Activated T-helper 2 cell treated with anti-CD3 and anti-CD28 coated beads, Interferon-gamma antibody, Interleukin-2, Interleukin-4, amounts not matched to agents 10 μg/mL and 5 μg/mL and 100 μg/mL, durations not matched to agents 14 hours and 24 hours and 36 hours (primary cell): ENCODE measurements at regions of chr4 and their contacts with region 1.

Region 1: GRCh38 chr4:55948726-55949474 is at the start of gene CEP135:
- DNase-seq: peak; percentile 91
- H3K4me3 Mint-ChIP-seq: peak within 1 kb of the TSS; percentile 83
- H3K27ac Mint-ChIP-seq: peak within 1 kb of the TSS; percentile 93
- H3K4me1 Mint-ChIP-seq: peaks cover 30% of the 10 kb centered on the region
- H3K27me3 Mint-ChIP-seq: no peaks in the 10 kb centered on the region
- total RNA-seq, gene CEP135: 13.3 and 15.7 TPM in 2 replicates

Region 2: GRCh38 chr4:55345980-55346850 is 602.7 kb before region 1 on chr4 and contains the start of gene SRD5A3:
- intact Hi-C with region 1: loop called (anchors 10 kb)
- DNase-seq: peak; percentile 72
- H3K4me3 Mint-ChIP-seq: peak within 1 kb of the TSS; percentile 90
- H3K27ac Mint-ChIP-seq: peak within 1 kb of the TSS; percentile 95
- H3K4me1 Mint-ChIP-seq: peaks cover 29% of the 10 kb centered on the region
- H3K27me3 Mint-ChIP-seq: no peaks in the 10 kb centered on the region
- total RNA-seq, gene SRD5A3: 32.4 and 33.5 TPM in 2 replicates

Region 3: DNA sequence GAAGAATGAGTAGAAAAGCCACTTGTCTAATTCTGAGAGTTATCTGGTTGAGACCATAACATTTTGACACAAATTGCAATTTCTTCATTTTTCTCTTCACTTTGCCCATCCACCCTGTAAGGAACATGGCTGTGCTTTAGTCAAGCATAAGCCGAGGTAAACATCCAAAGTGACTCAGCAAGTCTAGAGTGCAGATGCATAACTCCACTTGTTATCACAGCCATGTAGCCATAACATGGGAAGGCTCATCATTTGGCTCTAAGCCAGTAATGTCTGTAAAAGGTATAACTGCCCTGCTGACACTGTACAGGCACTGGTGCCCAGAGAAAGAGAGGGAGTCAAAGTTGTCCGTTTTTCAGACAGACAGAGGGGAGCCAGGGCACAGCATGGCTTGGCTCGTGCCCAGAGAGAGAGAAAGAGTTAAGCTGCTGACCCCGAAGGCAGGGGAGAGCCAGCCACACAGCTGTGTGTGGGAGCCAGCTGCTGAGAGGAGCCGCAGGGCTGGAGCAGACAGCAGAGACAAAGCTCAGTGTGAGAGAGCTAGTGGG is 206.2 kb before region 1 on chr4:
- intact Hi-C with region 1: no loop called
- DNase-seq: no peak
- H3K4me3 Mint-ChIP-seq: no peak overlapping the region
- H3K27ac Mint-ChIP-seq: no peak overlapping the region
- H3K4me1 Mint-ChIP-seq: no peaks in the 10 kb centered on the region
- H3K27me3 Mint-ChIP-seq: peaks cover 15% of the 10 kb centered on the region

Region 4: DNA sequence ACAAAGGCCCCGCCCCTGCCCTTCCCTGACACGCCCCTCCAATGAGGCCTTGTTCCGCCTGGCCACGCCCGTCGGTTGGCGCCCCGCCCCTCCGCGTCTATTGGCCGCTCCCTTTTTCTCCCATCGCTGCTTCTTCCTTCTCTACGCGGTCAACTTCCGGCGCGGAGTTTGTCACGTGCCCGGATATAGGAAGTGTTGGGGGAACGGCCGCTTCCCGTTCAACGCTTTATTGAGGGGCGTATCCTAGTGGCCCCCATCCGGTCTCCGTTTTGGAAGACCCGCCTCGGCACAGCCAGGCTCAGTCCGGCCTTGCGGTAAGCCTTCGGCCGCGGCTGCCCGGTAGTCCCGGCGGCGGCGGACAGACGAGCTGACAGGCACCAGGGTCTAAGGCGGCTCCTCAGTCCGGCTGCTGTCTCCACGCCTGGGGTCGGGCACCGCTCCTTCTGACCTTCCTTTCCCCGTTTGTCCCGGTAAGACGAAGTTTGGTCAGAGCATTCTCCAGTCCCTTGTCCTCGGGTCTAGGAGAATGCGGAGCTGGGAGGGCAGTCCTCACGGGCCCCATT is 95.3 kb before region 1 on chr4 and contains the start of gene EXOC1:
- intact Hi-C with region 1: loop called (anchors 2 kb)
- DNase-seq: peak; percentile 94
- H3K4me3 Mint-ChIP-seq: peak within 1 kb of the TSS; percentile 18
- H3K27ac Mint-ChIP-seq: peak within 1 kb of the TSS; percentile 89
- H3K4me1 Mint-ChIP-seq: peaks cover 20% of the 10 kb centered on the region
- H3K27me3 Mint-ChIP-seq: no peaks in the 10 kb centered on the region
- total RNA-seq, gene EXOC1: 20.4 and 22.2 TPM in 2 replicates

Region 5: DNA sequence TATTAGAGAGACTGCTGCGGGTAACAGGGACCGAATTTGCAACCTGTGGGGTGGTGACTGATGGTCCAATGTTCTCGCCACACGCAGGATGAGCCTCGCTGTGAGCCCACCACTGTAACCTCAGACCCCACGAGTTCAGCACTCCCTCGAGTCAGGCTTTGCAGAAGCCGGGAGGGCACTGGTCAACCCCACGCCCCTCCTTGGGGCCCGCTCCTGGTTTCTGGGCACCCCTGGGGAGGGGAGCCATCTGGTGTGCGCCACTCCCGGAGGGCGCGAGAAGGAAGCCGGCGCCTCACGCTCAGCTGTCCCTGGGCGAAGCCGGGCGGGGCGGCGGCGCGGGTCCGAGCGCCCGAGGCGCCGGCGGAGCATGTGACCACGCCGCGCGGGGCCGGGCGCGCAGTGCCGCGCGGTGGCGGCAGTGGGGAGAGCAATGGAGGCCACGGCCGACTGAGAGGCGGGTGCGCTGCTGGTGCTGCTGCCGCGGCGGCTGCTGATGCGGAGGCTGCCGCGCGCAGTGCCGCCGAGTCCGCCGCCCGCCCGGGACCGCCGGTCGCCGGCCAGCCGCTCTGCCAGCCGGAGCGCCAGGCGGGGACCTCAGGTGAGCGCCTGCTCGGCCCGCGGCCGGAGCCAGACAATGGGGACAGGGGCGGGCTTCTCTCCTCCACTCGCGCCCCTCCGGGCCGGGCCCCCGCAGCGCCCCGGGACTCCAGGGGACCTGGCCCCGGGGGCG is 100.0 kb after region 1 on chr4:
- intact Hi-C with region 1: loop called (anchors 1 kb)
- DNase-seq: peak; percentile 51
- H3K4me3 Mint-ChIP-seq: peak overlapping the region; percentile 68
- H3K27ac Mint-ChIP-seq: no peak overlapping the region
- H3K4me1 Mint-ChIP-seq: peaks cover 8% of the 10 kb centered on the region
- H3K27me3 Mint-ChIP-seq: peaks cover 59% of the 10 kb centered on the region

Region 6: GRCh38 chr4:56387023-56388001 is 438.4 kb after region 1 on chr4 and contains the start of gene AASDH:
- intact Hi-C with region 1: loop called (anchors 1 kb)
- DNase-seq: peak; percentile 91
- H3K4me3 Mint-ChIP-seq: peak within 1 kb of the TSS; percentile 92
- H3K27ac Mint-ChIP-seq: peak within 1 kb of the TSS; percentile 98
- H3K4me1 Mint-ChIP-seq: peaks cover 25% of the 10 kb centered on the region
- H3K27me3 Mint-ChIP-seq: no peaks in the 10 kb centered on the region
- total RNA-seq, gene AASDH: 10.4 and 15.4 TPM in 2 replicates

Region 7: DNA sequence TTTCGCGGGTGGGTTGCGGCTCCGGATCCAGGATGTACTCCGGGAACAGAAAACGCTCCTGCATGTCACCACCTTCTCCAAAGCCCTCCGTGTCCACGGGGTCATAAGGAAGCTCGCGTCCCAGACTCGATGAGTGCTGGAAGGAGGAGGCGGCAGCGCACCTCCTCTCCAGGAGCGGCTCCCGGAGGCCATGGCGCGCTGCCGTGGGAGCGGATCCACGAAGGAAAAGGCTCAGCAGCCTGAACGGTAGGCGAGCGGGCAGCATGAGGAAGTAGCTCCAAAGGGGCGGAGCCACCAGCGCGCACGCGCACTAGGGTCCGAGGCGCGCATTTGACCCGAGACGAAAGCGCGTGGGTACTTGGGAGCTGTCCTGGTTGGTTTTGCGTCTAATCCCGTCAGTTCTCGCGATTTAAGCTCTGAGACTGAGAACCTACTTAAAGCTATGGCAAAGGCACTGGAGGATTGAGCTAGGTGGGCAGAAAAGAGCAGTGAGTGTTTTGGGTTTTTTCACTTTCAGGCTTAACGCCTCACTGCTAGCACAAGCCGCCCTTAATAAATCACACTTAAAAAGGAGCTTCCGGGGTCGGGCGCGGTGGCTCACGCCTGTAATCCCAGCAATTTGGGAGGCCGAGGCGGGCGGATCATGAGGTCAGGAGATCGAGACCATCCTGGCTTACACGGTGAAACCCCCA is 1028.6 kb after region 1 on chr4 and contains the start of gene NOA1:
- intact Hi-C with region 1: loop called (anchors 5 kb)
- DNase-seq: peak; percentile 98
- H3K4me3 Mint-ChIP-seq: peak within 1 kb of the TSS; percentile 100
- H3K27ac Mint-ChIP-seq: peak within 1 kb of the TSS; percentile 100
- H3K4me1 Mint-ChIP-seq: peaks cover 41% of the 10 kb centered on the region
- H3K27me3 Mint-ChIP-seq: no peaks in the 10 kb centered on the region
- total RNA-seq, gene NOA1: 16.5 and 18.1 TPM in 2 replicates